Posterior cingulate gyrus (tissue), 11 donors: ENCODE measurements at regions of chr2 and their contacts with region 1.

Region 1: GRCh38 chr2:189661148-189661956 is at the start of gene ASNSD1:
- DNase-seq: peak; percentile 88 to 99 (median 93)

Region 2: GRCh38 chr2:189096769-189097447 is 564.4 kb before region 1 on chr2:
- intact Hi-C with region 1: no loop called
- DNase-seq: no peak

Region 3: GRCh38 chr2:189674374-189675112 is 13.2 kb after region 1 on chr2 and contains the start of gene ANKAR:
- intact Hi-C with region 1: loop called (anchors 1 kb)
- DNase-seq: peak; percentile 78 to 98 (median 86)

Region 4: DNA sequence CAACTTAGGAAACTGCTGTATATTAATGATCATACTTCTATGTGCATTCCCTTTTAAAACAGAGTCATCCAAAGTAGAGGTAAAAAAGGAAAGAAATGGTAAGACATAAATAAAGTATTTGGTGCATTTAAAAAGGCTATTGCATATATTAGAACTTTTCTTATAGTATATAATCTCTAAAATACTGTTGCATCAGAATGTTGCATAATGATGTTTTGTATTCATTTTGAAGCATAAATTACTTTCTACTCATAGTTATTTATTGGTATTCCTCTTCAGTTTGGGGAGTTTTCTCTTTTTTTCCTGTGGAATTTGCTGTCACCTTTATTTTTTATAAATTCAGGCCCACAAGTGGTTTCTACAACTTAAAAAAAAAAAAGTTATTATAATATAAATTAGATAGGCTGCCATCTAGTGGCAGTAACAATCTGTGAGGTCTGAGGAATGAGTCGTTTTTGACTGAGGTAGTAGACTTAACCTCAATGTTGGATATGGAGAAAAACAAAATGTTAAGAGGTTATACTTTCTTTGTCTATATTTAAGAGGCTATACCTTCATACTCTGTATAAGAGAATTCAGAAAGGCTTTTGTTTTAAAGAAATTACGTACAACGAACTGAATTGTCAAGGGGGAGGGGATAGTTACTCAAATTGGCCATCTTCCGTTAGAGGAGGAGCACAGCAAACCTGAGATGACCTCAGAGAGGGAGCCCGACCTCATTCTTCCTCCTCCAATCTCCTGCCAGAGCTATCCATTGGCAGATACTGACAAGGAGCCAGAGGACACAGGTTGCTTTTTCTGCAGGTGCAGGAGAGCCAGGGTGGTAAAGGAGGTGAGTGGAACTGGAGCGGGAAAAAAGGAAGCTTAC is 36.9 kb after region 1 on chr2:
- intact Hi-C with region 1: loop called (anchors 1 kb)
- DNase-seq: peak in 1 of 10 donors; percentile 15

Region 5: GRCh38 chr2:189762551-189763298 is 101.4 kb after region 1 on chr2 and contains the start of gene OSGEPL1:
- intact Hi-C with region 1: loop called (anchors 5 kb)
- DNase-seq: peak; percentile 91 to 99 (median 96)

Region 6: DNA sequence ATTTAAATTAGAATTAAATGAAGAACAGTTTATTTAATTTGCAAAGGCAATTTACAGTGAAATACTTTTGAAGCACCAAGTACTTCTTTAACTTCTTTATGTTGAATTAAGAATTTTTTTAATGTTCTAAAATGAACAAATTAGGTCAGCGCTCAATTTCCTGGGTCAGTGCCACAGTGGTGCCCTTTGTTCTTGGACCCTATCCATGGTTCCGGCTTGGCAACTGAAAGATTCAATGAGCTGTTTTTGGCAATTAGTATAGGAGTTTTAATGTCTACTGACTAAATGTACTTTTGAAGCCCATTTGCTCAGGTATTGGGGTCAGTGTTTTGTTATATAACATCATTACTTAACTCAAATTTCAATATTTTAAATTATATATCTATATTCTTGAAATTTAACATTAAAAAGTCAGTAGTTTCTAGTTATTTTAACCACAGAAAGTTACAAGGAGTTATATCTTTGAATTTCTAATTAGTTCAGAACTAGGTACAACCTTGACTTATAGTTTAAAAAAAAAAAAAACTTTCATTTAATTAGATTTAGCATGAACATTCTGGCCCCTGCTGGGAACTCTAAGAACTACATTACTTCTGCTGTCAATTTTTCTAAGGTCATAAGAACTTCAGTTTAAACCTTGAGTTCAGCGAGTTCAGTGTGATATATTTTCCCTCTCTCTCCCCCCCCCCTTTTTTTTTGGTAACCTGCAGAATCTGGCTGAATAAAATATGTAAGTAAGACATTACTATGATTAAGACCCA is 408.8 kb after region 1 on chr2:
- intact Hi-C with region 1: loop called (anchors 1 kb)
- DNase-seq: no peak